Common myeloid progenitor, CD34-positive (primary cell): ENCODE measurements at regions of chr14 and their contacts with region 1.

Region 1: GRCh38 chr14:68788996-68789820 is 3.7 kb downstream of the ZFP36L1 start:
- DNase-seq: peak; percentile 86 to 89 (median 89)
- H3K4me3 ChIP-seq: peak overlapping the region in 3 of 7 experiments; percentile 8 to 16 (median 14)
- H3K27ac ChIP-seq: no peak overlapping the region
- H3K4me1 ChIP-seq: peaks cover 6 to 68% (median 42%) of the 10 kb centered on the region in 4 experiments
- H3K27me3 ChIP-seq: no peaks in the 10 kb centered on the region

Region 2: GRCh38 chr14:67934008-67934481 is 855.2 kb before region 1 on chr14:
- CTCF ChIA-PET with region 1: interaction called, 17 read pairs
- POLR2A ChIA-PET with region 1: no interaction called
- DNase-seq: peak; percentile 81 to 87 (median 86)
- H3K4me3 ChIP-seq: no peak overlapping the region
- H3K27ac ChIP-seq: no peak overlapping the region
- H3K4me1 ChIP-seq: peaks cover 0 to 12% (median 7%) of the 10 kb centered on the region in 4 experiments
- H3K27me3 ChIP-seq: no peaks in the 10 kb centered on the region

Region 3: GRCh38 chr14:67943947-67944346 is 845.3 kb before region 1 on chr14:
- CTCF ChIA-PET with region 1: interaction called, 16 read pairs
- POLR2A ChIA-PET with region 1: no interaction called
- DNase-seq: peak; percentile 90 to 94 (median 94)
- H3K4me3 ChIP-seq: no peak overlapping the region
- H3K27ac ChIP-seq: no peak overlapping the region
- H3K4me1 ChIP-seq: peaks cover 6 to 22% (median 7%) of the 10 kb centered on the region in 4 experiments
- H3K27me3 ChIP-seq: no peaks in the 10 kb centered on the region

Region 4: DNA sequence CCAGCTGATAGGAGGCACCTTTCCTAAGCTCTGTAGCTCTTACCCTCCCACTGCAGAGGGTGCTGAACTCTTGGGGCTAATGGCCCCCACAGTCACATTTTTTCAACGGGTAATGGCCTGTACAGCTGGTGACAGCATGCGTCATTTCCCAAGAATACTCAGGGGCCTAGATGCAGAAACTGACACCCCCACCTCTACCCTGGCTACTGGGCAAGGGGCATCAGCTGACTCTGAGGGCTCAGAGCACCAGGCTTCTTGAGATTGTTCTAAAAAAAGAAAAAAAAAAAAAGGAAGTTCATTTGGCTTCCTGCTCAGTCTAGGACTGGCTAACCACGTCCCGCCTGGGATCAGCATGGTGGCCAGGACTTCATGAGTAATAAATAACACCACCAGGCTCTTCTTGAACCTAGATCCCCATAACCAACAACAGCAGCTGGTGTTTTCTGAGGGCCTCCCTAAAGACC is 31.6 kb before region 1 on chr14:
- CTCF ChIA-PET with region 1: interaction called, 10 read pairs
- POLR2A ChIA-PET with region 1: no interaction called
- DNase-seq: peak; percentile 92 to 98 (median 97)
- H3K4me3 ChIP-seq: no peak overlapping the region
- H3K27ac ChIP-seq: no peak overlapping the region
- H3K4me1 ChIP-seq: peaks cover 5 to 45% (median 39%) of the 10 kb centered on the region in 4 experiments
- H3K27me3 ChIP-seq: no peaks in the 10 kb centered on the region

Region 5: GRCh38 chr14:68771607-68772006 is 17.6 kb before region 1 on chr14:
- CTCF ChIA-PET with region 1: interaction called, 14 read pairs
- POLR2A ChIA-PET with region 1: no interaction called
- DNase-seq: peak; percentile 56 to 76 (median 70)
- H3K4me3 ChIP-seq: peak overlapping the region in 2 of 7 experiments; percentile 41 to 56
- H3K27ac ChIP-seq: no peak overlapping the region
- H3K4me1 ChIP-seq: peaks cover 8 to 38% (median 30%) of the 10 kb centered on the region in 4 experiments
- H3K27me3 ChIP-seq: no peaks in the 10 kb centered on the region

Region 6: DNA sequence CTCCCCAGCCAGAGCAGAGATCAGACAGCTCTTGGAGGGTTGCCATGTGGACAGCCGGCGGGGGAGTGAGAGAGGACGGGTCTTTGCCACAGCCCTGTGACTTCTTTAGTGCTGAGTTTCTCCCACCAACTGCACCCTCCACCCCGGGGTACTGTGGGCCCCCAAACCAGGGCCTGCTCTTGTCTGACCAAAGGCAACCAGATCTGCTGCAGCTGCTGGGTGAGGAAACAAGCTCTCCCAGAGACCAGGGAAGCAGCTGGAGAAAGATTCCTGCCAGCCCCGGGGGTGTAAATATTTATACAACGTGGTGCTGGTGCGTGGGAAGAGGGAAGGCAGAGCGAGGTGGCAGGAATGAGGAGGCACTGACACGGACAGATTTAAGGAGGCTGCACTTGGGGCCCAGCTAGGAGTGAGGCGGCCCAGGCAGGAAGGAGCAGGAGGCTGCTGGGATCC is 18.0 kb after region 1 on chr14:
- CTCF ChIA-PET with region 1: interaction called, 10 read pairs
- POLR2A ChIA-PET with region 1: no interaction called
- DNase-seq: peak; percentile 69 to 92 (median 90)
- H3K4me3 ChIP-seq: peak overlapping the region in 1 of 7 experiments; percentile 23
- H3K27ac ChIP-seq: peak overlapping the region in 1 of 2 experiments; percentile 36
- H3K4me1 ChIP-seq: peaks cover 6 to 21% (median 17%) of the 10 kb centered on the region in 4 experiments
- H3K27me3 ChIP-seq: no peaks in the 10 kb centered on the region